Right lobe of liver (tissue), 6 donors: ENCODE measurements at regions of chr5 and their contacts with region 1.

Region 1: DNA sequence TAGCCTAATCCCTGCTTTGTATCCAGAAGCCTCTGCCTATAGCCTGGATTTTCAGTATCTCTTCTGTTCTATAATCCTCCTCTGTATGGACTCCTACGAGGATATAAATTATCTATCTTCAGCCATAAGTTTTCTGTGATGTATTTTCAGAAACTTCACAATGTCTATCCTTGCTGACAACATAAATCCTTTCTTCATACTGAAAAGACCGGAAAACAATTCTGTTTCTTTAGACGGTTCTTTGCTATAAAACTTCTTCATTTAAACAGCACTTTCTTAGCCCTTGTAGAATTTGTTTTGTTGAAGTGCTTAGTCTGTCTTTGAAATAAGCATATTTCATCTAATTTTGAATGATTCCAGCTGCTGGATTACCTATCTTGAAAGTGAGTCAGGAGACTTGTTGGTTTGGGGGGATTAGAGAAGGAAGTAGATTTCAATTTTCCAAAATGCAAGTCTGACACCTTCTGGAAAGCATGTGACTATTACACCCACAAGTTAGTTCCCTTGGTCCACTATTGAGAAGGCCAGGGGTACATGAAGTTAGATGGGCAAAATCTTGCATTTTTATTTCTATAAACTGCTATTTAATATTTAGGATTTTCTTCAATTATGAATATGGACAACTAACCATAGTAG is 96.3 kb upstream of the RANBP3L start:
- DNase-seq: no peak
- ATAC-seq: peak; percentile 72 to 78 (median 76)
- H3K4me3 ChIP-seq: no peak overlapping the region
- H3K27ac ChIP-seq: no peak overlapping the region
- H3K4me1 ChIP-seq: peaks cover 0 to 5% (median 0%) of the 10 kb centered on the region in 4 donors
- H3K27me3 ChIP-seq: no peaks in the 10 kb centered on the region
- CTCF ChIP-seq: peak; percentile 45 to 65 (median 58)
- POLR2A ChIP-seq: no peak

Region 2: GRCh38 chr5:36264202-36264760 is 133.7 kb before region 1 on chr5:
- intact Hi-C with region 1: loop called in 1 of 2 experiments (anchors 10 kb)
- DNase-seq: no peak
- ATAC-seq: peak in 3 of 4 donors; percentile 29 to 41 (median 40)
- H3K4me3 ChIP-seq: no peak overlapping the region
- H3K27ac ChIP-seq: peak overlapping the region in 2 of 3 donors; percentile 7 to 11
- H3K4me1 ChIP-seq: peaks cover 0 to 1% (median 0%) of the 10 kb centered on the region in 4 donors
- H3K27me3 ChIP-seq: no peaks in the 10 kb centered on the region
- CTCF ChIP-seq: no peak
- POLR2A ChIP-seq: no peak

Region 3: GRCh38 chr5:36491856-36492255 is 93.8 kb after region 1 on chr5:
- intact Hi-C with region 1: no loop called
- DNase-seq: no peak
- ATAC-seq: no peak
- H3K4me3 ChIP-seq: no peak overlapping the region
- H3K27ac ChIP-seq: no peak overlapping the region
- H3K4me1 ChIP-seq: no peaks in the 10 kb centered on the region
- H3K27me3 ChIP-seq: no peaks in the 10 kb centered on the region
- CTCF ChIP-seq: no peak
- POLR2A ChIP-seq: no peak